K562 (cell line): ENCODE measurements at regions of chr1 and their contacts with region 1.

Region 1: GRCh38 chr1:154955718-154956543 is at the start of gene PBXIP1:
- DNase-seq: peak; percentile 85 to 97 (median 89)
- ATAC-seq: peak; percentile 88
- H3K4me3 ChIP-seq: peak within 1 kb of the TSS; percentile 50
- H3K27ac ChIP-seq: peak within 1 kb of the TSS; percentile 63
- H3K4me1 ChIP-seq: peaks cover 31 to 47% of the 10 kb centered on the region in 2 experiments
- H3K27me3 ChIP-seq: no peaks in the 10 kb centered on the region
- CTCF ChIP-seq: peak; percentile 45 to 58 (median 46); a peak in 5 of 6 replicates
- EP300 ChIP-seq: no peak
- POLR2A ChIP-seq: no peak
- RAD21 ChIP-seq: peak; percentile 23 to 40; a peak in 2 of 4 replicates
- polyA plus RNA-seq, gene PBXIP1: 0.13 to 0.22 TPM

Region 2: GRCh38 chr1:154992721-154993571 is 37.0 kb after region 1 on chr1:
- CTCF ChIA-PET with region 1: interaction called, 4 read pairs
- POLR2A ChIA-PET with region 1: interaction called, 10 read pairs
- in situ Hi-C with region 1: no loop called
- intact Hi-C with region 1: loop called (anchors 2 kb)
- DNase-seq: peak; percentile 63 to 88 (median 72)
- ATAC-seq: peak; percentile 85
- H3K4me3 ChIP-seq: no peak overlapping the region
- H3K27ac ChIP-seq: peak overlapping the region; percentile 73; the same call in 2 of the 3 replicates
- H3K4me1 ChIP-seq: peaks cover 35 to 40% of the 10 kb centered on the region in 2 experiments
- H3K27me3 ChIP-seq: no peaks in the 10 kb centered on the region
- CTCF ChIP-seq: peak in 2 of 3 experiments; percentile 7 to 13; a peak in 1 of 6 replicates
- EP300 ChIP-seq: peak; percentile 18; the same call in 1 of the 2 replicates
- POLR2A ChIP-seq: peak; percentile 39; the same call in 1 of the 2 replicates
- RAD21 ChIP-seq: no peak

Region 3: DNA sequence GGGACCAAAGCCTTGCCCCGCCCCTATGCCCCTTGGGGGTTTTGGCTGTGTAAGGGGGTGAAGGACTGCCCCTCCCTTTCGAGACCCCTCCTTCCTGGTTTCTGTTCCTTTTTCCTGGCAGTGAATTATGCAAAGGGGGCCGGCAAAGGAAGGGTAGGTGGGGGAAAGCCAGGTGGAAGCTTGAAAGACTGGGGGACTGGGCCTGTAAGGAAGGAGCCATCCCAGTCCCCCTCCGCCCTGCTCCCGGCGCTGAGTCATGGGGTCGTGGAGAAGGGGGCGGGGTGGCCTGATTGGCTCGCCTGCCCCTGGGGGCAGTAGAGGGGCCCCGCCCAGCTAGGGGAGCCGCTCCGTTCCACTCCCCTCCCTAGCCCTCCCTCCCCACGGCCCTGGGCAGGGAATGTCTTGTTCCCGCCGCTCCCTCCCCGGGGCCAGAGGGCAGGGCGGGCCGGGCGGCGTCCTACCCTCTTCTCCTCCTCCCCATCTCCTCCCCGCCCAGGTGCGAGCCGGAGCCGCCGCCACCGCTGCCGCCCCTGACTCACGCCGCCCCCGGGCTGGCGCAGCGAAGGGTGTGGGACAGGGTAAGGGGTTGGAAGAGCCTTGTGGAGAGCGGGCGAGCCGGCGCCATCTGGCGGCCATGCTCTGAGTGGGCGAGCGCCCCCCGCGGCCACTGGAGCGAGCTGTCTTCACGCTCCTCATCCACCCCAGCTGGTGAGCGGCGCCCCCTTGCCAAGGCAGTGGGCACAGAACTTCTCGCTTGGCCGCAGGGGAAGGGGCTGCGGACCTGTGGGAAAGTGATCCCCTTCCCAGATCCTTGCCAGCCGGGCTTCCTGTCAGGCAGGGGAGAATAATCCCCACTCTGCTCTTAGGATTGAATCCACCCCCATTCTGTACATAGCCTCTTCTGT is 61.4 kb after region 1 on chr1:
- CTCF ChIA-PET with region 1: interaction called, 28 read pairs
- POLR2A ChIA-PET with region 1: interaction called, 12 read pairs
- in situ Hi-C with region 1: no loop called
- intact Hi-C with region 1: loop called (anchors 2 kb)
- DNase-seq: peak; percentile 90 to 96 (median 91)
- ATAC-seq: peak; percentile 93
- H3K4me3 ChIP-seq: peak overlapping the region; percentile 31
- H3K27ac ChIP-seq: peak overlapping the region; percentile 81
- H3K4me1 ChIP-seq: peaks cover 28 to 57% of the 10 kb centered on the region in 2 experiments
- H3K27me3 ChIP-seq: no peaks in the 10 kb centered on the region
- CTCF ChIP-seq: peak; percentile 100
- EP300 ChIP-seq: no peak
- POLR2A ChIP-seq: peak; percentile 63
- RAD21 ChIP-seq: peak; percentile 92 to 96

Region 4: GRCh38 chr1:155063550-155064110 is 107.7 kb after region 1 on chr1 and contains the start of gene EFNA4:
- CTCF ChIA-PET with region 1: no interaction called
- POLR2A ChIA-PET with region 1: interaction called, 4 read pairs
- in situ Hi-C with region 1: loop called (anchors 5 kb)
- intact Hi-C with region 1: no loop called
- DNase-seq: peak; percentile 91 to 93 (median 92)
- ATAC-seq: peak; percentile 91
- H3K4me3 ChIP-seq: peak within 1 kb of the TSS; percentile 58
- H3K27ac ChIP-seq: peak within 1 kb of the TSS; percentile 45; the same call in 2 of the 3 replicates
- H3K4me1 ChIP-seq: peaks cover 27 to 58% of the 10 kb centered on the region in 2 experiments
- H3K27me3 ChIP-seq: no peaks in the 10 kb centered on the region
- CTCF ChIP-seq: no peak
- EP300 ChIP-seq: no peak
- POLR2A ChIP-seq: peak; percentile 71
- RAD21 ChIP-seq: no peak
- polyA plus RNA-seq, gene EFNA4: 0.68 to 0.89 TPM